ENCODE measurements at regions of chr11 and their contacts with region 1.

Region 1: GRCh38 chr11:16785520-16786128 is 47.2 kb downstream of the C11orf58 start:
- DNase-seq: peak; percentile 56 to 76 (median 70)
- H3K4me3 ChIP-seq: no peak overlapping the region
- H3K27ac ChIP-seq: no peak overlapping the region
- H3K4me1 ChIP-seq: peaks cover 0 to 13% (median 10%) of the 10 kb centered on the region in 4 experiments
- H3K27me3 ChIP-seq: no peaks in the 10 kb centered on the region

Region 2: DNA sequence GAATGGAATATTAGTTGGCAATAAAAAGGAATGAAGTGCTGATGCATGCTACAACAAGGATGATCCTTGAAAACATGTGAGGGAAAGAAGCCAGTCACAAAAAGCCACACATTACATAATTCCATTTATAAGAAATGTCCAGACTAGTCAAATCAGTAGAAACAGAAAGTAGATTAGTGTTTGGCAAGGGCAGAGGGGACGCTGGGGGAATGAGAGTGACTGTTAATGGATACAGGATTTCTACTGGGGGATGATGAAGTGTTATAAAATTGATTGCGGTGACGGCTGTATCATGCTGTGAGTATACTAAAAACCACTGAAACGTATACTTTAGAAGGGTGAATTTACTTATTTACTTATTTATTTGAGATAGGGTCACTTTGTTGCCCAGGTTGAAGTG is 10.7 kb after region 1 on chr11:
- CTCF ChIA-PET with region 1: interaction called, 28 read pairs
- POLR2A ChIA-PET with region 1: no interaction called
- DNase-seq: peak in 1 of 3 donors; percentile 22
- H3K4me3 ChIP-seq: no peak overlapping the region
- H3K27ac ChIP-seq: no peak overlapping the region
- H3K4me1 ChIP-seq: peaks cover 11 to 57% (median 43%) of the 10 kb centered on the region in 4 experiments
- H3K27me3 ChIP-seq: no peaks in the 10 kb centered on the region

Region 3: GRCh38 chr11:16809886-16810668 is 24.5 kb after region 1 on chr11:
- CTCF ChIA-PET with region 1: interaction called, 184 read pairs
- POLR2A ChIA-PET with region 1: no interaction called
- DNase-seq: peak in 2 of 3 donors; percentile 44 to 59
- H3K4me3 ChIP-seq: no peak overlapping the region
- H3K27ac ChIP-seq: no peak overlapping the region
- H3K4me1 ChIP-seq: peaks cover 10 to 63% (median 33%) of the 10 kb centered on the region in 4 experiments
- H3K27me3 ChIP-seq: no peaks in the 10 kb centered on the region

Region 4: GRCh38 chr11:16881074-16881709 is 95.6 kb after region 1 on chr11:
- CTCF ChIA-PET with region 1: interaction called, 99 read pairs
- POLR2A ChIA-PET with region 1: no interaction called
- DNase-seq: peak in 2 of 3 donors; percentile 14 to 24
- H3K4me3 ChIP-seq: no peak overlapping the region
- H3K27ac ChIP-seq: no peak overlapping the region
- H3K4me1 ChIP-seq: peaks cover 0 to 5% (median 0%) of the 10 kb centered on the region in 4 experiments
- H3K27me3 ChIP-seq: no peaks in the 10 kb centered on the region